CD4-positive, alpha-beta T cell (primary cell): ENCODE measurements at regions of chr2 and their contacts with region 1.

Region 1: DNA sequence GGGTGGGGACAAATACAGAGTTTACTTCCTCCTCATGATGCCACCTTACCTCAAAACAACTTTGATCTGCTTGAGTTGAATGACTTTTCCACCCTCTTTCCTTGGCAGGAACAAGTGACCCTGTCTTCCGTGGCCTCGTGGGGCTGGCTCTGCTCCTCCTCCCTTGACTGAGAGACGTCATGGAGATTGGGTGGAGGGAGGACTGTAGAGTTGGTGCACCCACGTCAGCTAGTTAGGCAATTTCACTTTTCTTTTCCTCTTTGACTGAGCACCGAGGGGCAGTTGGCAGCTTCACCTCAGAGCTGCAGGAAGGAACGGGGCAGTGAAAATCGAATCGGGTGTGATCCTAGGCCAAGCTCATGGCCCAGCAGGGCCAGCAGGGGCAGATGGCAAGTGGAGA is at the start of gene SP140:
- DNase-seq: peak; percentile 50 to 97 (median 70)
- ATAC-seq: peak; percentile 89
- H3K4me3 ChIP-seq: peak within 1 kb of the TSS; percentile 75
- H3K4me3 Mint-ChIP-seq: peak within 1 kb of the TSS; percentile 90
- H3K27ac ChIP-seq: peak within 1 kb of the TSS; percentile 64 to 89
- H3K27ac Mint-ChIP-seq: peak within 1 kb of the TSS; percentile 93
- H3K4me1 ChIP-seq: peaks cover 29% of the 10 kb centered on the region
- H3K4me1 Mint-ChIP-seq: peaks cover 64% of the 10 kb centered on the region
- H3K27me3 ChIP-seq: no peaks in the 10 kb centered on the region
- H3K27me3 Mint-ChIP-seq: no peaks in the 10 kb centered on the region
- CTCF ChIP-seq: no peak
- total RNA-seq, gene SP140: 51.2 to 55.1 TPM

Region 2: GRCh38 chr2:230244211-230244610 is 18.7 kb after region 1 on chr2:
- CTCF ChIA-PET with region 1: no interaction called
- POLR2A ChIA-PET with region 1: no interaction called
- intact Hi-C with region 1: no loop called
- DNase-seq: no peak
- ATAC-seq: no peak
- H3K4me3 ChIP-seq: no peak overlapping the region
- H3K4me3 Mint-ChIP-seq: no peak overlapping the region
- H3K27ac ChIP-seq: no peak overlapping the region
- H3K27ac Mint-ChIP-seq: no peak overlapping the region
- H3K4me1 ChIP-seq: no peaks in the 10 kb centered on the region
- H3K4me1 Mint-ChIP-seq: no peaks in the 10 kb centered on the region
- H3K27me3 ChIP-seq: no peaks in the 10 kb centered on the region
- H3K27me3 Mint-ChIP-seq: no peaks in the 10 kb centered on the region
- CTCF ChIP-seq: no peak

Region 3: GRCh38 chr2:230262246-230262645 is 36.8 kb after region 1 on chr2:
- CTCF ChIA-PET with region 1: no interaction called
- POLR2A ChIA-PET with region 1: interaction called, 10 read pairs
- intact Hi-C with region 1: loop called in 1 of 2 experiments (anchors 5 kb)
- DNase-seq: peak in 3 of 14 experiments; percentile 42 to 73 (median 50)
- ATAC-seq: peak; percentile 94
- H3K4me3 ChIP-seq: peak overlapping the region; percentile 19
- H3K4me3 Mint-ChIP-seq: peak overlapping the region; percentile 40
- H3K27ac ChIP-seq: peak overlapping the region in 1 of 2 donors; percentile 48
- H3K27ac Mint-ChIP-seq: peak overlapping the region; percentile 76
- H3K4me1 ChIP-seq: peaks cover 3% of the 10 kb centered on the region
- H3K4me1 Mint-ChIP-seq: peaks cover 49% of the 10 kb centered on the region
- H3K27me3 ChIP-seq: no peaks in the 10 kb centered on the region
- H3K27me3 Mint-ChIP-seq: no peaks in the 10 kb centered on the region
- CTCF ChIP-seq: no peak

Region 4: DNA sequence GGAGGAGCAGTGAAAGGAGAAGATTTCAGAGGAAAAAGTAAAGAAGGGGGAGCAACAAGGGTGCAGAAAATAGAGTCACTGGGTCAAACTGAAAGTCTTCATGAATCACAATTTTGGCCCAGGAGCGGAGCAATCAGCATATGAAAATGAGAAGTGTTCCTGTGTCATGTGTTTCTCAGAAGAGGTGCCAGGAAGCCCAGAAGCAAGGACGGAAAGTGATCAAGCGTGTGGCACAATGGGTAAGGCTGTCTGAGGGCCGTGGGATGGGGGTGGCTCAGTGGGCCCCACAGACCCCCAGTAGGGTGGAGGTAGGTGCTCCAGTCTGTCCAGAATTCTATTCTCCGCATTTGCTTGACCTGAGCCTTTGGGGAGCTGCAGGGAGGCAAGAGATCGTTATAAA is 44.2 kb after region 1 on chr2:
- CTCF ChIA-PET with region 1: no interaction called
- POLR2A ChIA-PET with region 1: no interaction called
- intact Hi-C with region 1: loop called (anchors 5 kb)
- DNase-seq: no peak
- ATAC-seq: no peak
- H3K4me3 ChIP-seq: no peak overlapping the region
- H3K4me3 Mint-ChIP-seq: no peak overlapping the region
- H3K27ac ChIP-seq: no peak overlapping the region
- H3K27ac Mint-ChIP-seq: no peak overlapping the region
- H3K4me1 ChIP-seq: peaks cover under 1% of the 10 kb centered on the region
- H3K4me1 Mint-ChIP-seq: peaks cover 17% of the 10 kb centered on the region
- H3K27me3 ChIP-seq: no peaks in the 10 kb centered on the region
- H3K27me3 Mint-ChIP-seq: no peaks in the 10 kb centered on the region
- CTCF ChIP-seq: no peak

Region 5: GRCh38 chr2:230319211-230319862 is 93.9 kb after region 1 on chr2:
- CTCF ChIA-PET with region 1: no interaction called
- POLR2A ChIA-PET with region 1: interaction called, 43 read pairs
- intact Hi-C with region 1: no loop called
- DNase-seq: peak; percentile 50 to 97 (median 69)
- ATAC-seq: peak; percentile 95
- H3K4me3 ChIP-seq: peak overlapping the region; percentile 24
- H3K4me3 Mint-ChIP-seq: peak overlapping the region; percentile 72
- H3K27ac ChIP-seq: peak overlapping the region; percentile 62 to 69
- H3K27ac Mint-ChIP-seq: peak overlapping the region; percentile 87
- H3K4me1 ChIP-seq: peaks cover 61% of the 10 kb centered on the region
- H3K4me1 Mint-ChIP-seq: peaks cover 88% of the 10 kb centered on the region
- H3K27me3 ChIP-seq: no peaks in the 10 kb centered on the region
- H3K27me3 Mint-ChIP-seq: no peaks in the 10 kb centered on the region
- CTCF ChIP-seq: no peak

Region 6: DNA sequence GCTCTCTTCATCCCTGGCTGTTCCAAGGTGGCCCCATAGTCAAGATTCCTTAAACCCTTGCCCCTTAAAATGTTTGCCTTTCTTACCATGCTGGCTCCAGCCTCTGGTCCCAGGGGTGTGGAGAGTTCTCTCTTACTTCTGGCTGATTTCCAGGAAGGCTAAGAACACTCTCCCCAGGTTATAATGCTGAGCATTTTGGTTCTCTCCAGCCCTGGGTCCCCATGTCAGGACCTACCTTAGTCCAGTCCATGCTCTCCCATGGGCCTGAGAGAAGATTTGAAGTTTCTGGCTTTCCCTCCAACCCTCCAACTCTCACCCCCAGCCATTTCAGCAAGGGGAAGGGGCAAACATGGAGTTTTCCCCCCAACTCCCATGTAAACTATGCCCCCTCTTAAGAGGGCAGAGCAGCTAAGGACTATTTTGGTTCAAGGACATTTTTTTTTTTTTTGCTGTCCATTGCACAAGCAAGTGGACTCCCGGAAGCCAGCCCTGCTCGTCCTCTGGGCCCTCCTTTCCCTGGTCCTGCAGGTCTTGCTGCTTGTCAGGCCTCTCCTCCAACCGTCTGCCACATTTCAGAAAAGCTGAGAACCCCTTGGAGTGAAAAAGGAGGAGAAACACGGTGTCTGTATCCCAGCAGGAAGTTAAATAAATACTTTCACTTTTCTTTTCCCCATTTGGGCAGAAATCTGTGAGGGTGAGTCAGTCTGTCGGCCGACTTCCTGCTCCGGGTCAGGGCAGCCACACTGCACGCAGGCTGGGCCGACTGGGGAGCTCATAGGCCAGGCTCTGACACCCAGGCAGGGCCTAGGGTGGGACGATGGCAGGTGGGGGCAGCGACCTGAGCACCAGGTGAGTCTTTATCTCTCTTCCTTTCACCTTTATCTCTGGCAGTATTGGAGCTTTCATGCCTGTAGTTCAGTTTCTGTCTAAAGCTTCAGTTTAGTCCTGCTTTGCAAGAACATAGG is 101.2 kb after region 1 on chr2 and contains the start of gene SP140L:
- CTCF ChIA-PET with region 1: no interaction called
- POLR2A ChIA-PET with region 1: interaction called, 38 read pairs
- intact Hi-C with region 1: no loop called
- DNase-seq: peak; percentile 63 to 91 (median 77)
- ATAC-seq: peak; percentile 99
- H3K4me3 ChIP-seq: peak within 1 kb of the TSS; percentile 70
- H3K4me3 Mint-ChIP-seq: peak within 1 kb of the TSS; percentile 90
- H3K27ac ChIP-seq: peak within 1 kb of the TSS; percentile 89 to 92
- H3K27ac Mint-ChIP-seq: peak within 1 kb of the TSS; percentile 98
- H3K4me1 ChIP-seq: peaks cover 45% of the 10 kb centered on the region
- H3K4me1 Mint-ChIP-seq: peaks cover 85% of the 10 kb centered on the region
- H3K27me3 ChIP-seq: no peaks in the 10 kb centered on the region
- H3K27me3 Mint-ChIP-seq: no peaks in the 10 kb centered on the region
- CTCF ChIP-seq: no peak
- total RNA-seq, gene SP140L: 55.3 to 64.1 TPM

Region 7: DNA sequence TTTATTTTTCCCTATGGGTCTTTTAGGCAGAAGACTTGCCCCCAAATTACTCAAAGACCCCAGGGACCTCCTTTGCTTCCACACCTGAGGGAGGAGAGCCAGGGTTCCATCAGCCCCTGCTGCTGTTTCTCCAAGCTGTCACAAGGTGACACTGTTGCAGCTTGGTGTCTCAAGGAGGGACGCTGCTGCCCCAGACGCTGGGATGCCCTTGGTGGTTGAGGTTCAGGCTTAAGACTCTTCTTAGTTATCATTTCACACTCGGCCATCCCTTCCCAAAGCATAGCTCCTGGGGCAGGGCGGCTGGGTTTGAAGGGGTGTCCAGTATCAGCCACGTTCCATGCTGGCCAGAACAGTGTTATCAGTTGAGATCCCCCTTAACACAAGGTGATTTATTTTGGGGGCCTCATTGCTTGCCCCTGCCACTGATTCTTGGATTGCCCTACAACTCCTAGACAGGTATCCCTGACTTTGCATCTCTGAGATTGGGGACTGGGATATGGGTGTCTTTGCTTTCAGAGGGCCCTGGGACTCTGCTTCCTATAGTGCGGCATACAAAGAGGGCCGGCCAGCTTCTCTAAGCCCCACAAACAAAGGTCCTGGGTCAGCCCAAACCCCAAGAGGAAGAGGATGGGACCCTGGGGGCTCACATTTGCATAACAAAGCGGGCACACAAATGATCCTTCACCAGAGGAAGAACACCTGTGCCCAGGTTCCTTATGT is 676.9 kb after region 1 on chr2:
- CTCF ChIA-PET with region 1: no interaction called
- POLR2A ChIA-PET with region 1: no interaction called
- intact Hi-C with region 1: no loop called
- DNase-seq: peak; percentile 29 to 82 (median 42)
- ATAC-seq: peak; percentile 19
- H3K4me3 ChIP-seq: no peak overlapping the region
- H3K4me3 Mint-ChIP-seq: no peak overlapping the region
- H3K27ac ChIP-seq: no peak overlapping the region
- H3K27ac Mint-ChIP-seq: no peak overlapping the region
- H3K4me1 ChIP-seq: peaks cover 27% of the 10 kb centered on the region
- H3K4me1 Mint-ChIP-seq: peaks cover 33% of the 10 kb centered on the region
- H3K27me3 ChIP-seq: no peaks in the 10 kb centered on the region
- H3K27me3 Mint-ChIP-seq: no peaks in the 10 kb centered on the region
- CTCF ChIP-seq: peak; percentile 70